ENCODE measurements at regions of chr12 and their contacts with region 1.

Region 1: DNA sequence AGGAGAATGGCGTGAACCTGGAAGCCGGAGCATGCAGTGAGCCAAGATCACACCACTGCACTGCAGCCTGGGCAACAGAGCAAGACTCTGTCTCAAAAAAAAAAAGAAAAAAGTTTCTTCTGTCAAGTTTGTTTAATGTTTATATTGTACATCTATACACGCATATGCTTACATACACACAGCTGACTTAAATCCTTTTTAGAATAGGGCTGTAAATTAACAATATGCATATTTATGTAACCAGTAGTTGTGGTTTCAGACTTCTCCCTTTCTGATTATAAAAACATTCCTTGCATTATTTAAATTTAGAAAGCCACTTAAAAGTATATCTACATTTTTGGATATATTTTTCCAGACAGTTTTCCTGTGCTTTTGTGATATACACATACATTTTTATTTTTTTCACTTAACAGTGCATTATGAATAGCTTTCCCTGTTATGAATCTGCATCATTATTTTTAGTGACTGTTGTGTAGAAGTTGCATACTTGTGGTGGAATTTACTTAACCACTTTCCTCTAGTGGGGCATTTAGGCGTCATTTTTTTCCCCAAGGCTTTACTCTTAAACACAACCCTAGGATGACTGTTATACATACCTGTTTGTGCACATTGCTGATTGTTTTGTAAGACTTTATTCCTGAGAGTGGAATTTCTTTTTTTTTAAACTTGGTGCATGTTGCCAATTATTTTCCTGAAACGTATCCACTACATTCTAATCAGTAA is 29.4 kb downstream of the POLR3B start:
- DNase-seq: no peak
- H3K4me3 ChIP-seq: no peak overlapping the region
- H3K27ac ChIP-seq: no peak overlapping the region
- H3K4me1 ChIP-seq: no peaks in the 10 kb centered on the region
- H3K27me3 ChIP-seq: no peaks in the 10 kb centered on the region
- CTCF ChIP-seq: no peak
- EP300 ChIP-seq: no peak
- POLR2A ChIP-seq: no peak

Region 2: DNA sequence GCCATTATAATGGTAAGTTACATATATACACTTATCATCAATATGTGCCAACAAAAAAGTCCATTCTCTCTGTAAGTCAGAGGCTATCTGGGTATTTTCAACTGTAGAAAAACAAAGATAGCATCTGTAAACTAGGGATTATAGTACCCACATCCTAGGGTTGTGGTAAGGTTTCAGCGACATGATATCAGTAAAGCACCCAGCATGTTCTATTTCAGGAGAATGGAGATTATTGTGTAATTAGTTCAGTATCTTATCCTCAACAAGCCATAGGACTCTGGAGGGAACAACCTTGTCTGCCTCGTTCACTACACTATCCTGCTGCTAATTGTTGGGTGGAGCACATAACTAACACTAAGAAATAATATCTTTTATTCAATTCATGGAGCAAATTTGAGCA is 119.4 kb before region 1 on chr12:
- in situ Hi-C with region 1: no loop called
- intact Hi-C with region 1: no loop called
- DNase-seq: no peak
- H3K4me3 ChIP-seq: no peak overlapping the region
- H3K27ac ChIP-seq: no peak overlapping the region
- H3K4me1 ChIP-seq: no peaks in the 10 kb centered on the region
- H3K27me3 ChIP-seq: no peaks in the 10 kb centered on the region
- CTCF ChIP-seq: no peak
- EP300 ChIP-seq: no peak
- POLR2A ChIP-seq: no peak

Region 3: DNA sequence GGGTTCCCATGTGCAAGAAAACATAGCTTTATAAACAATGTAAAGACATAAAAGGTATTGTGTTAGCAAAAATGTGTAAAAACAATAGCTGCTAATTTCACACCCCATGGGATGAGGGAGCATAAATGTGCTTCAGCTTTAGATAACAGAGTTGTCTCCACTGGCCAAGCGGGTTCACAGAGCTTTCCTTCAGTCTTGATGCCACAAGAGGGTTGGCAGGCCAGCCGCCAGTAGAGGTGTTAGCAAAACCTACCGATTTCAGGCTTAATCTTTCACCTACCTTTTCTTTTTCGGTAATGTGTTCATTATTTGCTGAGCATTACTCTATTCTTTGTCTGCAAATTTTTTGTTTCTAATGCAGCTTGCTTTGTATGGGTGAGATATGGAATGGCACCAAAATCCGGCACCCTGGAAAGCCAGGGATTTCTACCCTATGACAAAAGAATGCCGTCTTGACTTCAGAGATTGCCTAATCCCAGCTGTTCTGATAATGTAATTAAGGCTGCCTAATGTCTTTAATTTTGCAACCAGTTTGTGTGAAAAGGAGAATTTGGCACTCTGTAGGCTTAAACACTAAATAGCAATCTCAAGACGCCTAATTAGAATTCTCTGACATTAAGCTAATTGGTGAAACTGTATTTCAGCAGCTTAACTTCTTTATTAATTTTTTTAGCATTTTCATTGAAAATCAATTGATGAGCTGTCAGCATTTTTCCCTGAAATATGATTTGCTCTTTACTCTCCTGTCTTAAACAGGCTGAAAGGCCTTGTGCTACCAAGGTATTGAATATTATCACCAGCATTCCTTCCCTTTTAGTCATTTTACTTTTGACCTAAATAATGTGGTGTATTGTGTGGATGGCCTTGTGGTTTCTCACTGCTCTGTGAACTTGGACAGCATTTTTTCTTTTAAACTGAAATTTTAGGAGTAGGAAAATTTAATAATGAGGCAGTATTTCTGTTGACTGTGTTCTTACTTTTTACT is 31.2 kb after region 1 on chr12:
- in situ Hi-C with region 1: no loop called
- intact Hi-C with region 1: no loop called
- DNase-seq: no peak
- H3K4me3 ChIP-seq: no peak overlapping the region
- H3K27ac ChIP-seq: no peak overlapping the region
- H3K4me1 ChIP-seq: no peaks in the 10 kb centered on the region
- H3K27me3 ChIP-seq: no peaks in the 10 kb centered on the region
- CTCF ChIP-seq: no peak
- EP300 ChIP-seq: no peak
- POLR2A ChIP-seq: no peak

Region 4: GRCh38 chr12:106841510-106842302 is 454.7 kb after region 1 on chr12:
- in situ Hi-C with region 1: loop called in 2 of 4 experiments (anchors 10 to 25 kb)
- intact Hi-C with region 1: loop called (anchors 10 kb)
- DNase-seq: peak; percentile 29
- H3K4me3 ChIP-seq: no peak overlapping the region
- H3K27ac ChIP-seq: peak overlapping the region; percentile 2 to 46 (median 24)
- H3K4me1 ChIP-seq: peaks cover 19 to 38% (median 25%) of the 10 kb centered on the region in 4 donors
- H3K27me3 ChIP-seq: no peaks in the 10 kb centered on the region
- CTCF ChIP-seq: peak; percentile 55 to 61 (median 55)
- EP300 ChIP-seq: no peak
- POLR2A ChIP-seq: no peak

Region 5: GRCh38 chr12:106919910-106920544 is 533.1 kb after region 1 on chr12:
- in situ Hi-C with region 1: loop called (anchors 5 to 10 kb)
- intact Hi-C with region 1: loop called (anchors 10 kb)
- DNase-seq: no peak
- H3K4me3 ChIP-seq: no peak overlapping the region
- H3K27ac ChIP-seq: no peak overlapping the region
- H3K4me1 ChIP-seq: peaks cover 0 to 4% (median 0%) of the 10 kb centered on the region in 4 donors
- H3K27me3 ChIP-seq: peaks cover 5% of the 10 kb centered on the region
- CTCF ChIP-seq: peak; percentile 80 to 89 (median 86)
- EP300 ChIP-seq: no peak
- POLR2A ChIP-seq: no peak

Region 6: GRCh38 chr12:107109741-107110719 is 723.1 kb after region 1 on chr12:
- in situ Hi-C with region 1: loop called (anchors 10 to 25 kb)
- intact Hi-C with region 1: no loop called
- DNase-seq: no peak
- H3K4me3 ChIP-seq: no peak overlapping the region
- H3K27ac ChIP-seq: peak overlapping the region in 1 of 4 donors; percentile 29
- H3K4me1 ChIP-seq: peaks cover 0 to 9% (median 0%) of the 10 kb centered on the region in 4 donors
- H3K27me3 ChIP-seq: no peaks in the 10 kb centered on the region
- CTCF ChIP-seq: no peak
- EP300 ChIP-seq: no peak
- POLR2A ChIP-seq: no peak

Measured in transverse colon (tissue), 4 donors.